ENCODE measurements at regions of chr5 and their contacts with region 1.

Region 1: DNA sequence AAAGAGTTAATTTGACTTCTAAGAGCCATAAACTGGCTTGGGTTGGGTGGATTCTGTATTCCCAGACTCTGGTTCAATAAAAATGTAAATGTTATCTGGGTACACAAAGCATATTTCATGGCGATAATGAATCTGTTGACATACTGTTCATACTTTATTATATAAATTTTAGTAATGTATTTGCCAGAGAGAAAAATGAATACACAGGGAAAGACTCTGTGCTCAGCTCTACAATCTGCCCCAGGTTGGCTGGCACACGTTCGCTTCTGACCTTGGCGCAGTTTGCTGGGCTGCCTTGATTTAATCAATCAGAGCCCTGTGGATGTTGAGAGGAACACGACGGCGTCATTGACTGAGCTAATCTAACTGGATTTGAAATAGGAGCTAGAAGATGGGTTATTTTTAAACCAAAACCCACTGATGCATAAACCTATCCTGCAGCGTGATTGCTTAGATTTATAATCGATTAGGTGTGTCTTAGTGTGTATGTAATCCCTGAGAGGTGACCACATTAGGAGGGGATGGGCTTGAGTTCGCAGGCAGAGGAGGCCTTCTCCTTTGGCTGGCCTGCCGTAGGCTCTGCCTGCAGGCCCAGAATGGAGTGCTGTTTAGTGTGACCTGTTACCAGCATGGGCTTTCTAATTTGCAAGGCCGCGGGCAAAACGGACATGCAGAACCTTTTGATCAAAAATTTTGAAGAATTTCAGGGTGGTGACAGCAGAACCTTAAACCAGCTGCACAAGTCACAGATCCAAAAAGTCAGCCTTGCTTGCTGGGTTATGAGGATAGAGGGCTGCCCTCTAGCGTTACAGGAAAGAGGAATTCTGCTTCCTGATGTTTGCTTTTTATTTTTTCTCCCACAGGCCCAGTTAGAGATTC is 3.9 kb upstream of the ADCY2 start:
- DNase-seq: no peak
- ATAC-seq: no peak
- H3K4me3 ChIP-seq: no peak overlapping the region
- H3K27ac ChIP-seq: no peak overlapping the region
- H3K4me1 ChIP-seq: no peaks in the 10 kb centered on the region
- H3K27me3 ChIP-seq: no peaks in the 10 kb centered on the region

Region 2: GRCh38 chr5:7208938-7209337 is 183.1 kb before region 1 on chr5:
- intact Hi-C with region 1: no loop called
- DNase-seq: no peak
- ATAC-seq: peak; percentile 44
- H3K4me3 ChIP-seq: no peak overlapping the region
- H3K27ac ChIP-seq: no peak overlapping the region
- H3K4me1 ChIP-seq: no peaks in the 10 kb centered on the region
- H3K27me3 ChIP-seq: no peaks in the 10 kb centered on the region

Region 3: GRCh38 chr5:7436506-7436905 is 44.5 kb after region 1 on chr5:
- intact Hi-C with region 1: no loop called
- DNase-seq: no peak
- ATAC-seq: no peak
- H3K4me3 ChIP-seq: no peak overlapping the region
- H3K27ac ChIP-seq: no peak overlapping the region
- H3K4me1 ChIP-seq: no peaks in the 10 kb centered on the region
- H3K27me3 ChIP-seq: no peaks in the 10 kb centered on the region

Region 4: GRCh38 chr5:7745882-7746610 is 354.0 kb after region 1 on chr5:
- intact Hi-C with region 1: loop called (anchors 5 kb)
- DNase-seq: peak; percentile 80 to 85
- ATAC-seq: no peak
- H3K4me3 ChIP-seq: no peak overlapping the region
- H3K27ac ChIP-seq: no peak overlapping the region
- H3K4me1 ChIP-seq: no peaks in the 10 kb centered on the region
- H3K27me3 ChIP-seq: no peaks in the 10 kb centered on the region

Region 5: DNA sequence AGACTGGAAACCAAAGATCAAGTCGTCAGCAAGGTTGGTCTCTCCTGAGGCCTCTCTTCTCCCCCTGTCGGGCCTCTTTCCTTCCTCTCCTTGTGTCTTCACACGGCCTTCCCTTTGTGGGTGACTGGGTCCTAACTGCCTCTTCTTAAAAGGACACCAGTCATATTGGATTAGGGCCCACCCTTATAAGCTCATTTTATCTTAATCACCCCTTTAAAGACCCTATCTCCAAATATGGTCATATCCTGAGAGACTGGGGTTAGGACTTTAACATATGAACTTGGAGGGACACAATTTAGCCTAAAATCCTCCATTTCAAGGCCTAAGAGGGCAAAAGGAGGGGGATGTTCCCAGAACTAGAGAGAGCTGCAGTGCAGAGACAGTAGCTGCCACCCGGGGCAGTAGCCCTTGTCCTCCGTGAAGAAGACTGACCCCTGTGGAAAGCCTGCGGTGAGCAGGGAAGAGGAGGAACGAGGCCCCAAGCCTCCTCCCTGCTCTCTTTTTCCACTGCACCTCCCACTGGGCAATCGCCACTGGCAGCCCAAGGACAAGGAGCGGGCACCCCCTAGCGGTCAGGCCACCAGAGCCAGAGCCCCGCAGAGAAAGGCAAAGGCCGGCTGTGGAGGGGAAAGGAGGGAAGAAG is 424.0 kb after region 1 on chr5:
- intact Hi-C with region 1: loop called in 1 of 2 experiments (anchors 5 kb)
- DNase-seq: peak; percentile 90 to 95
- ATAC-seq: peak; percentile 92
- H3K4me3 ChIP-seq: no peak overlapping the region
- H3K27ac ChIP-seq: no peak overlapping the region
- H3K4me1 ChIP-seq: no peaks in the 10 kb centered on the region
- H3K27me3 ChIP-seq: no peaks in the 10 kb centered on the region

Region 6: DNA sequence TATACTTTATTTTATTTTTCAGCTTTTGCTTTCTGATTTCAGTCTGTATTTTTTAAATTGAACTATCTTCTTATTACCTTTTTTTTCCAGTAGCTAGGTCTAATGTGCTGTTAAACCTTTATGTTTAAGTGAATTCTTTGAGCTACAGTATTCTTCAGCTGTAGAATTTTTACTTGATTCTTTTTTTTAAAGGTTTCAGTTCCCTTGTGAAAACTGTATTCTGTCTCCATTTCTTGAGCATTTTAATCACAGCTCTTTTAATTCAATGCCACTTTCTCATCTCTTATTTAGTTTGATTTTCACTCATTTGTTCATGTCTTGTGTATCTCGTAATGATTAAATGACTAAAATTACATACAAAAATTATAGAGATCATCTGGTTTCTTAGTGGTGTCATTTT is 710.7 kb after region 1 on chr5:
- intact Hi-C with region 1: no loop called
- DNase-seq: no peak
- ATAC-seq: no peak
- H3K4me3 ChIP-seq: no peak overlapping the region
- H3K27ac ChIP-seq: no peak overlapping the region
- H3K4me1 ChIP-seq: no peaks in the 10 kb centered on the region
- H3K27me3 ChIP-seq: no peaks in the 10 kb centered on the region

Measured in aorta (tissue), 5 donors.